ENCODE measurements at regions of chr10 and their contacts with region 1.

Region 1: GRCh38 chr10:110636932-110637557 is 7.1 kb upstream of the RBM20 start:
- DNase-seq: peak; percentile 42
- H3K4me3 ChIP-seq: no peak overlapping the region
- H3K27ac ChIP-seq: peak overlapping the region in 1 of 2 experiments; percentile 60; a peak in 2 of 4 replicates
- H3K4me1 ChIP-seq: peaks cover 8 to 41% of the 10 kb centered on the region in 2 experiments; a peak in 3 of 4 replicates
- H3K27me3 ChIP-seq: no peaks in the 10 kb centered on the region
- CTCF ChIP-seq: no peak
- EP300 ChIP-seq: 0 out of 4 replicates have a peak, but pooled peaks of 1 of the 2 experiments have one; percentile 10
- RAD21 ChIP-seq: no peak

Region 2: DNA sequence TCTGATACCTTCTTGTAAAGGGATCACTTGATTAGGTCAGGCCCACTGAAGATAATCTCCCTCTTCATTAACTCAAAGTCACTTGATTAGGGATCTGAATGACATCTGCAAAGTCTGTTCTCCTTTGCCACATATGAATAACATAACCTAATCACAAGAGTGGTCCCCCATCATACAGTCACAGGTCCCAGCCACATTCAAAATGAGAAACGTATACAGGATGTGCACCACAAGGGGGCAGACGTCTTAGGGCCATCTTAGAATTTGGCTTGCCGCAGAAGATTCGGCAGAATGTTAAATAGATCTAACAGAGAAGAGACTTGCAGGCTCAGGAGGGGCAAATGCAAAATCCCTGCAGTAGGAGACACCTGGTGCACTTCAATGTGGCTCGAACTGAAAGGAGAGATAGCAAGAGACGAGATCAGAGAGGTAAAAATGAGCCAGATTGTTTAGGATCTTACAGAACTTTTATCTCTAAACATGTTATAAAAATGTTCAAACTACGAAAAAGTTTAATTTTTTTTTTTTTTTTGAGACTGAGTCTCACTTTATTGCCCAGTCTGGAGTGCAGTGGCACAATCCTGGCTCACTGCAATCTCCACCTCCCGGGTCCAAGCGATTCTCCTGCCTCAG is 80.0 kb before region 1 on chr10:
- CTCF ChIA-PET with region 1: no interaction called
- POLR2A ChIA-PET with region 1: no interaction called
- DNase-seq: peak; percentile 41
- H3K4me3 ChIP-seq: no peak overlapping the region
- H3K27ac ChIP-seq: no peak overlapping the region
- H3K4me1 ChIP-seq: no peaks in the 10 kb centered on the region
- H3K27me3 ChIP-seq: no peaks in the 10 kb centered on the region
- CTCF ChIP-seq: peak; percentile 73
- EP300 ChIP-seq: no peak
- RAD21 ChIP-seq: peak; percentile 50

Region 3: DNA sequence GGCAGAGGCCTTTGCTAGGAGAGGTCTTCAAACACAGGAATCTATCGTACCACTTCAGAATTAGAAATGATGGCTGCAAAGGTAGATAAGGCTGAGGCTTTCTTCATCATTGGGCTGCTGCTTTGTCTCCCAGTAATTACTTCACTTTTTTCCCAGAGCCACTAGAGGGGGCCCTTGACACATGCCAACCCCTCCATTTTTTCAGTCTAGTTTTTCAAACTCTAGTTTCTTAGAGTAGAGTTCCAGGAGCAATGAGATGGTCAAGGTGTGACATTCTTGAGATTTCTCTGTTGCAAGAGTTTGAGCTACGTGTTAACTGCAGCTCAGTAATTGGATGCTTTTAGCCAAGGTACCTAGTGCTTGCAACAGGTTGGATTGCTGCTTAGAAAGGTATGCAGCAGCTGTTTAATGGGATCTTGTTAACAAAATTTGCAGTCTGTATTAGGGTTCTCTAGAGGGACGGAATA is 26.7 kb before region 1 on chr10:
- CTCF ChIA-PET with region 1: interaction called, 15 read pairs
- POLR2A ChIA-PET with region 1: no interaction called
- DNase-seq: peak; percentile 69
- H3K4me3 ChIP-seq: peak overlapping the region in 1 of 2 experiments; percentile 16; a peak in 1 of 4 replicates
- H3K27ac ChIP-seq: peak overlapping the region in 1 of 2 experiments; percentile 74; a peak in 2 of 4 replicates
- H3K4me1 ChIP-seq: peaks cover 0 to 11% of the 10 kb centered on the region in 2 experiments; a peak in 2 of 4 replicates
- H3K27me3 ChIP-seq: no peaks in the 10 kb centered on the region
- CTCF ChIP-seq: peak; percentile 92
- EP300 ChIP-seq: no peak
- RAD21 ChIP-seq: peak; percentile 94

Region 4: DNA sequence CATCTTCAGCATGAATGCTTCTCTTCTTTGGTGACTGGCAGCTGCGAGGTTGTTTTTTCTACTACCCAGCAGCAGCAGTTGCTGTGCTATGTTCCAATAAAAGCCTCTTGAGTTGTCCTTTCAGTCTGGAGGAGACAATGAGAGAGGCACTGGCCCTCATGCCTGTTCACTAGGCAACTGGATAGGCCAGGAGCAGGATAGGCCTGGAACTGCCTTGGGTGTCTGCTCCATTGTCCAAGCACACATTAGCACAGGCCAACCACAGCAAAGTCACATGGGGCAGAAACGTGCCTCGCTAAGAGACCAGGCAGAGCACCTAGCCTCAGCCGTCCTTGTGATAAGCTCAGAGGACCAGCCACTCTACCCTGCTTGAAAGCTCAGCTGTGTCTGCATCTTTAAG is 157.8 kb after region 1 on chr10:
- CTCF ChIA-PET with region 1: no interaction called
- POLR2A ChIA-PET with region 1: no interaction called
- DNase-seq: no peak
- H3K4me3 ChIP-seq: no peak overlapping the region
- H3K27ac ChIP-seq: peak overlapping the region in 1 of 2 experiments; percentile 99; a peak in 2 of 4 replicates
- H3K4me1 ChIP-seq: peaks cover 7 to 71% of the 10 kb centered on the region in 2 experiments; a peak in 2 of 4 replicates
- H3K27me3 ChIP-seq: no peaks in the 10 kb centered on the region
- CTCF ChIP-seq: no peak
- EP300 ChIP-seq: no peak
- RAD21 ChIP-seq: no peak

Region 5: GRCh38 chr10:111785921-111786320 is 1148.9 kb after region 1 on chr10:
- CTCF ChIA-PET with region 1: no interaction called
- POLR2A ChIA-PET with region 1: no interaction called
- DNase-seq: no peak
- H3K4me3 ChIP-seq: no peak overlapping the region
- H3K27ac ChIP-seq: no peak overlapping the region
- H3K4me1 ChIP-seq: no peaks in the 10 kb centered on the region
- H3K27me3 ChIP-seq: no peaks in the 10 kb centered on the region
- CTCF ChIP-seq: no peak
- EP300 ChIP-seq: no peak
- RAD21 ChIP-seq: no peak